ENCODE measurements at regions of chr2 and their contacts with region 1.

Region 1: GRCh38 chr2:231563378-231563961 is 29.2 kb upstream of the TEX44 start:
- DNase-seq: peak; percentile 79
- CTCF ChIP-seq: peak; percentile 76

Region 2: DNA sequence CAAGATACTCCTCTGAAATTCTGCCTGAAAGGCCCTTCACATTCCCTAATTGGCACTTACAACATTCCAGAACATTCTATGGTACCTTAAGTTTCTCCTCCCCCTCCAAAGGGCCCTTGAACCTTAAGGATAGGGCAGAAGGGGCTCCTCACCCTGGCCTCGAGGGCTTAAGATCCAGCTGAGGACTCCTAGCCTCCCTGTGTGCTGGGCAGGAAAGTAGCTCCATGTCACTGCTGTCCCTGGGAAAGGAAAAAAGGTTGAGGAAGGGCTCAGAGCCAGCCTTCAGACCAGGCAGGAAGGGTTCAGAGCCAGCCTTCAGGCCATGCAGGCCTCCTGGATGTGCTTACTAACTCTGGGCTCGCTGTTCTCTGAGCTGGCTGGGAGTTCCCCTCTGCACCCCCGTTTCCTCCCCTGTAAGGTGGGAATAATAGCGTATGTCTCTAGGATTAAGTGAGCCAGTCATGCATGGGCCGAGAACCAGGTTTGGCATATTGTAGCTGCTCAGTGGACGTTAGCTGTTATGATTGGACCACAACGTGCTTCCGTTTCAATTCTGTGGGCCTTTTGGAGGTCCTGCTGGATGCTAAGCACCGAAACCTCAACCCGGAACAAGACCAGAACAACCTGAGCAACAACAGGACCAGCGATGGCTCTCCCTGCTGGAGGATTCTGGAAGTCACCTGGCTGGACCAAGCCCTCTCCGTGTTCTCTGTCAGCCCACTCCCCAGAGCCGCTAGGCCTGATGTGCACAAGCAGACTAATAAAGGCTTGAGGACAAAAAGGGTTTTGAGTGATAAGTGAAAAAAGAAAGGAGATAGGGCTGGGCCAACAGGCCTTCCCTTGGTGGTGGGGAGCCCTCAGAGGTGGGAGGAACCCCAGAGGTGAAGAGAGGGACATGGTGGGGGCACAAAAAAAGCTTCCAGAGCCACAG is 169.0 kb before region 1 on chr2:
- CTCF ChIA-PET with region 1: no interaction called
- POLR2A ChIA-PET with region 1: no interaction called
- DNase-seq: peak; percentile 82
- CTCF ChIP-seq: peak; percentile 61

Region 3: DNA sequence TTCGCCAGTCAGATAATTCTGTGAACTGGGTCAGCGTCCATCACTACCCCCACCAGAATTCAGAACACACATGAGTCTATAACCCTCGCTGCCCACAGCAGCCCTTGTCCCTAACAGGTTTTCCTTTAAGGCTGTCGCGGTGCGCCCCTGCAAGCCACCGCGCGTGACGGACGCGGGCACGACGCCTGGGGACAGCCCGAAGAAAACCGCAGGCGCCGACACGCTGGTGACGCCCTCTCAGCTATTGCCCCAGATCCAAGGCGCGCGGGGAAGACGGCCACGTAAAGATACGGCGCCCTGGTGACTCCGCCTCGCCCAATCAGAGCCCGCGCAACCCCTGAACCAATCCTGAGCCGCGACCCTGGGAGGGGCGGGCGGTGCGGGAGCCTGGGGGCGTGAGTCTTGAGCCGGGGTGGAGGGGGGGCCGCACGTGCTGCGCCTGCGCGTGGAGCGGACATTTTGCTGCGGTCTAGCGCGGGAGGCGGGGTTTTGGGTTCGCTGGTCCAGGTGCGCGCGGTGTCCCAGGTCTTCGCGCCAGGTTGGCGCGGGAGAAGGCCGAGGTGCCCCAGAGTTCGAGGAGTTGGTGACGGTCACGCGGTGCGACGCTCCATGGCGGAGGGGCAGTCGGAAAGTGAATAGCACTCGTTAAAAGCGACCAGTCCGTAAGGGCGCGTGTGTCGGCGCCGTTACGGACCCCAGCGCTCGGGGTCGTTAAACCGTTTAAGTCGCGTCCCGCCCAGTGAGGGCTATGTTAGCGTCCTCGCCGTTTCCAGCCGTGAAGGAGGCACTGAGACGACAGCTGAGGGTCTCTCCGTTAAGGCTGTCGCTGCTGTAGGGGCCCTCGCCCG is 49.1 kb before region 1 on chr2:
- CTCF ChIA-PET with region 1: interaction called, 46 read pairs
- POLR2A ChIA-PET with region 1: no interaction called
- DNase-seq: peak; percentile 100
- CTCF ChIP-seq: no peak

Region 4: GRCh38 chr2:231545105-231545902 is 18.2 kb before region 1 on chr2:
- CTCF ChIA-PET with region 1: interaction called, 45 read pairs
- POLR2A ChIA-PET with region 1: interaction called, 5 read pairs
- DNase-seq: peak; percentile 89
- CTCF ChIP-seq: no peak

Region 5: DNA sequence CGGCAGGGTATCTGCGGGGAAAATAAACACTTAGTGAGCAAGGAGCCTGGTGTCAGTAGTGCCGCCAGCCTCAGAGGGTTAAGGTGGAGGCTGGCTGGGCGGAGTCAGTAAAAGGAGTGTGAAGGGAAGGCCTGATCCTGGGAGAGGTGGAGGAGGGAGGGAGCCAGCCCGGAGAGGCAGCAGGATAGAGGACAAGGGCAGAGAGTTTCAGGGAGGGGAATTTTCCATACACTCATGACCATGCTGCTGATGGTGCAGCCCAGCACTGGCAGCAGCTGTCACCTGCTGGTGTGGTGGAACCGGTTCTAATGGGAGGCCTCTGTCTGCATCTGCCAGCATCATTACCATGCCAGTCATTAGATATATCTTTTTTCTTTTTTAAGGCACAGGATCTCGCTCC is 27.1 kb after region 1 on chr2:
- CTCF ChIA-PET with region 1: interaction called, 10 read pairs
- POLR2A ChIA-PET with region 1: interaction called, 4 read pairs
- DNase-seq: no peak
- CTCF ChIP-seq: no peak

Measured in GM10248 (cell line).